Heart right ventricle (tissue), 16 donors: ENCODE measurements at regions of chr22 and their contacts with region 1.

Region 1: GRCh38 chr22:33018232-33018864 is 39.8 kb downstream of the SYN3 start:
- DNase-seq: peak; percentile 47 to 53
- ATAC-seq: peak in 6 of 8 donors; percentile 54 to 75 (median 67)
- H3K4me3 ChIP-seq: no peak overlapping the region
- H3K27ac ChIP-seq: no peak overlapping the region
- H3K4me1 ChIP-seq: no peaks in the 10 kb centered on the region
- H3K27me3 ChIP-seq: peaks cover 0 to 36% (median 3%) of the 10 kb centered on the region in 7 donors
- CTCF ChIP-seq: peak; percentile 66 to 93 (median 90)

Region 2: DNA sequence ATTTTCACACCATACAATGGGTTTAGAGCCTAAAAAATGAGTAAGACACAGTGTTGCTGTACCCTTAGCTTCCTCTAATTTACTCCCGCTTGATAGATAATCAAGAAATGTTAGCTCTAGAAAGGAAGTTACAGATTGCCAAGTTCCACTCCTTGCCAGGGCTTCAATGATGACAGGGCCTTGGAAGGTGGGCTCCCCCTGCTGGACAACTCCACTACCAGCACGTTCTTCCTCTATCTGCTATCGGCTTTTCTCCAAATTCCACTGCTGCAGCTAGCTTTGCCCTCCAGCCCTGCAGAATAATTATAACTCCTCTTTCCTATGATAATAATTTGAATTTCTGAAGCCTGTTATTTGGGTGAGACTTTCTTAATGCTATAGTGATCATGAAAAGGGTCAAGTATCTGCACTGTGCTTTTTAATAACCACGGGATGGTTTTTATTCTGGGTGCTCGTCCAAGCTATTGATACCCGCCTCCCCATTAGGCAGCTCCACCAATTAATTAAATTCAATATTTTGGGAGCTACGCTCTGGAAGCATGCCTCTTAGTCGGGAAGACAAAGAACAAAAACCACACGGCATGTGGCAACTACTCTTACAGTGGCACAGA is 30.9 kb after region 1 on chr22:
- intact Hi-C with region 1: loop called in 3 of 10 experiments (anchors 1 to 2 kb)
- DNase-seq: peak; percentile 60 to 84
- ATAC-seq: peak; percentile 59 to 85 (median 78)
- H3K4me3 ChIP-seq: no peak overlapping the region
- H3K27ac ChIP-seq: no peak overlapping the region
- H3K4me1 ChIP-seq: peaks cover 0 to 7% (median 0%) of the 10 kb centered on the region in 9 donors
- H3K27me3 ChIP-seq: peaks cover 0 to 37% (median 19%) of the 10 kb centered on the region in 7 donors
- CTCF ChIP-seq: peak; percentile 79 to 95 (median 92)

Region 3: DNA sequence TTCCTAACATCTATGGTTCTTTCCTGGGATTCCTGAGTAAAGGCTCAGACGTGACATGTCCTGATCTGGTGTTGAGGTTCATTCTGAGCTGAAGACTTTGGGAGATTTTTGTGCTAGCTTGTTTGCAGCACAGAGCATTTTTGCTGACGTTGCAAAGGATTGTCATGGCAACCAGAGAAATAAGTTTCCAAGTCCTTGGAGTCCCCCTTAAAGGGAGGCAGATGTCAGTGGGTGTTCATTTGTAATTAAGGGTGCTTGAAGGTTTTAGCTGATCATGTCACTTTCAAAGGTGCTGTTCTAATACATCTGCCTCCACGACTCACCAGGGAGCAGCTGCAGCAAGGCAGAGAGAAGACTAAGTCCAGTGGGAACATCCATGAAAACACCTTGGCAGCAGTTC is 45.3 kb after region 1 on chr22:
- intact Hi-C with region 1: no loop called
- DNase-seq: no peak
- ATAC-seq: no peak
- H3K4me3 ChIP-seq: no peak overlapping the region
- H3K27ac ChIP-seq: no peak overlapping the region
- H3K4me1 ChIP-seq: no peaks in the 10 kb centered on the region
- H3K27me3 ChIP-seq: peaks cover 3 to 52% (median 16%) of the 10 kb centered on the region in 7 donors
- CTCF ChIP-seq: no peak

Region 4: DNA sequence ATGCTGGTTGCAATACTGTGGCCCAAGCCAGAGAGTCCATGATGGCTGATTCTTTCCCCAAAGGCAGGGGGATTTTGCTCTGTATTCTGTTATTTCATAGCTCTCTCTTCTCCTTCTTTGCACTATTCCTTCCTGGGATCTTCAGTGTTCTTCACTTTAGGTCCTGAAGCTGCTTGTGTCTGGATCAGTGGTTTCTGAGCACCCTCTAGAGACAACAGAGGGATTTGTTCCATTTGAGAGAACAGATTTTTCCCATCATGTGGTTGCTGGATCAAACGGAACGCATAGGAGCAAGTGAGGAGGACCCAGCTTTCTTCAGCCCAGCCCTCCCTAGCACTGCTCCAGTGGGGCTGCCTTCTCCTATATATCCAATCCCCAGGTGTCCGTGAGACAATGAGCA is 108.5 kb after region 1 on chr22:
- intact Hi-C with region 1: loop called in 2 of 10 experiments (anchors 2 to 10 kb)
- DNase-seq: no peak
- ATAC-seq: no peak
- H3K4me3 ChIP-seq: no peak overlapping the region
- H3K27ac ChIP-seq: no peak overlapping the region
- H3K4me1 ChIP-seq: no peaks in the 10 kb centered on the region
- H3K27me3 ChIP-seq: peaks cover 0 to 23% (median 0%) of the 10 kb centered on the region in 7 donors
- CTCF ChIP-seq: peak in 4 of 9 donors; percentile 7 to 27 (median 7)

Region 5: GRCh38 chr22:33202455-33202854 is 184.1 kb after region 1 on chr22:
- intact Hi-C with region 1: loop called (anchors 1 to 10 kb)
- DNase-seq: no peak
- ATAC-seq: no peak
- H3K4me3 ChIP-seq: no peak overlapping the region
- H3K27ac ChIP-seq: no peak overlapping the region
- H3K4me1 ChIP-seq: peaks cover 0 to 3% (median 0%) of the 10 kb centered on the region in 9 donors
- H3K27me3 ChIP-seq: peaks cover 0 to 20% (median 5%) of the 10 kb centered on the region in 7 donors
- CTCF ChIP-seq: no peak

Region 6: GRCh38 chr22:33209930-33210784 is 191.8 kb after region 1 on chr22:
- intact Hi-C with region 1: loop called in 2 of 10 experiments (anchors 10 kb)
- DNase-seq: peak in 1 of 2 donors; percentile 8
- ATAC-seq: peak in 6 of 8 donors; percentile 47 to 74 (median 56)
- H3K4me3 ChIP-seq: no peak overlapping the region
- H3K27ac ChIP-seq: no peak overlapping the region
- H3K4me1 ChIP-seq: no peaks in the 10 kb centered on the region
- H3K27me3 ChIP-seq: peaks cover 0 to 26% (median 4%) of the 10 kb centered on the region in 7 donors
- CTCF ChIP-seq: peak in 7 of 9 donors; percentile 49 to 64 (median 59)